HepG2 (cell line): ENCODE measurements at regions of chr17 and their contacts with region 1.

Region 1: GRCh38 chr17:81927653-81928543 is at the start of gene MAFG:
- DNase-seq: peak; percentile 94
- ATAC-seq: peak; percentile 46
- H3K4me3 ChIP-seq: peak within 1 kb of the TSS; percentile 79 to 94 (median 91)
- H3K27ac ChIP-seq: peak within 1 kb of the TSS; percentile 92
- H3K4me1 ChIP-seq: peaks cover 64% of the 10 kb centered on the region
- H3K27me3 ChIP-seq: no peaks in the 10 kb centered on the region
- CTCF ChIP-seq: peak; percentile 73
- EP300 ChIP-seq: 0 out of 4 replicates have a peak, but pooled peaks of 1 of the 2 experiments have one; percentile 11
- POLR2A ChIP-seq: peak in 1 of 2 experiments; percentile 31; a peak in 1 of 4 replicates
- RAD21 ChIP-seq: peak; percentile 85
- total RNA-seq, gene MAFG: 12.4 and 14.5 TPM in 2 replicates

Region 2: GRCh38 chr17:81902023-81902652 is 25.8 kb before region 1 on chr17 and contains the start of gene NPB:
- CTCF ChIA-PET with region 1: no interaction called
- POLR2A ChIA-PET with region 1: interaction called, 10 read pairs
- in situ Hi-C with region 1: no loop called
- intact Hi-C with region 1: no loop called
- DNase-seq: no peak
- ATAC-seq: peak; percentile 22
- H3K4me3 ChIP-seq: peak within 1 kb of the TSS; percentile 17 to 65 (median 35); a peak in 4 of 6 replicates
- H3K27ac ChIP-seq: peak within 1 kb of the TSS; percentile 28
- H3K4me1 ChIP-seq: peaks cover 16% of the 10 kb centered on the region
- H3K27me3 ChIP-seq: no peaks in the 10 kb centered on the region
- CTCF ChIP-seq: no peak
- EP300 ChIP-seq: no peak
- POLR2A ChIP-seq: no peak
- RAD21 ChIP-seq: peak; percentile 46
- total RNA-seq, gene NPB: 0.56 and 0.93 TPM in 2 replicates

Region 3: DNA sequence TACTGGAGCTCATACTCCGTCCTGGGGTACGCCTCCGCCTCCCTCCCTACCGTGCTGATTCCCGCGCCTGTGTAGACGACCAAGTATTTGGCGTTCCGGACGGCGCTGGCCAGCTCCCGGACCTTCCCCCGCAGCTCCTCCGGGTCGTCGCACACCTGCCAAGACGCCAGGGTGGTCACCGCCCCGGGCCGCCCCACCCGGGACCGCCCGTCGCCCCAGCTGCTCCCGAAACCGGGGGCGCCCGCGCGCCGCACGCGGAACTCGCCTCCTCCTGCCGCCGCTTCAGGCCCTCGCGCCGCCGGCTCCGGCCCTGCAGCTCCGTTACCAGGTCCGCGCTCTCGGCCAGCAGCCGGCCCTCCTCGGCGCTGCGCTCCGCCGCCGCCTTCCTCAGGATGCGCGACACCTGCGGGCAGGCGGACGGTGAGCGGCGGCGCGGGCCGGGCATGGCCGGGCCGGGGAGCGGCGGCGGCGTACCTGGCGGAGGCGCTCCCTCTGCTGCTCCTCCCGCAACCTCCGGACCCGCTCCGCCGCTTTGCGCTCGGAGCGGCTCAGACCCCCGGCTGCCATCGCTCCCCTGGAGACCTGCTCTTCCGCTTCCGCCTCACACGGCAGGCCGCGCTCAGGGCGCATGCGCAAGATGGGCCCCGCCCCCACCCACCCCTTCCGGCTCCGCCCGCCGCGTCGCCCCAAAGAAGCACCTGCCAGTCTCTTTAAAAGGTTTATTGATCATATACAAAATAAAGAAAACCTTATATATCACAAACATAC is 10.1 kb before region 1 on chr17 and contains the start of gene SIRT7:
- CTCF ChIA-PET with region 1: no interaction called
- POLR2A ChIA-PET with region 1: interaction called, 49 read pairs
- in situ Hi-C with region 1: no loop called
- intact Hi-C with region 1: no loop called
- DNase-seq: peak; percentile 72
- ATAC-seq: peak; percentile 67
- H3K4me3 ChIP-seq: peak within 1 kb of the TSS; percentile 87 to 94 (median 93)
- H3K27ac ChIP-seq: peak within 1 kb of the TSS; percentile 46
- H3K4me1 ChIP-seq: peaks cover 27% of the 10 kb centered on the region
- H3K27me3 ChIP-seq: no peaks in the 10 kb centered on the region
- CTCF ChIP-seq: no peak; the same call in 1 of the 2 replicates
- EP300 ChIP-seq: no peak
- POLR2A ChIP-seq: peak; percentile 50 to 80; a peak in 3 of 4 replicates
- RAD21 ChIP-seq: peak; percentile 66
- total RNA-seq, gene SIRT7: 14.5 and 24.8 TPM in 2 replicates

Region 4: DNA sequence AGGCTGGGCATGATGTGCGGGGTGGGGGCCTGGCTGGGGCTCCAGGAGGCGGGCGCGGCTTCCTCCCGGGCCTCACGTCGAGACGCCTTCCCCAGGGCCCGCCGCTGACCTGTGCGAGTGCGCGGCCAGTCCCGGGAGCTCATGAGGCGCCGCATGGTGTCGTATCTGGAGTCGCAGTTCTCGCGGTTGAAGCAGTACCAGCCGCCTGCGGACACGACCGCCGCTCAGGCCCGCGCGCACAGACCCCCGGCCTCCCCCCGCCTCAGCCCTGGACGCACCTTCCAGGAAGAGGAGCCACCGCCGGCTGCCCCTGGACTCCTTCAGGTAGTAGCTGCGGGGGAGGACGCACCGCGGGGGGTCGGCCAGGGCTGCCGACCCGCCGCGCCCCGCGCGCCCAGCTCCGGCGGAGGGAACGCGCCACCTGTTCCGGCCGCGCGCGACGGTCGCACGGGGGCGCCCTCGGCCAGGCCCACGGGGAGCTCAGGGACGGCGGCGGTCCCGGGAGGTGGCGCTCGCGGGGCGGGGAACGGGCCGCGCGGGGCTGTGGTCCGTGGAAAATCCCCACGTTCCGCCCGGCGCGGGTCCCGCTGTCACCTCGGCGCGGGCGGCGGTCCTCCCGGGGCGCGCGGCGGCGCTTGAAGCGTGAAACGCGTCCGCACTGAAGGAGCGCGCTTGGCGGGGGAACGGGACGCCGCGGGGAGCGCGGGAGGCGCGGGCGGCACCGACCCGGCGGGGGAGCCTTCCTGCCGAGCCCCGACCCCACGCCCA is 31.6 kb after region 1 on chr17:
- CTCF ChIA-PET with region 1: no interaction called
- POLR2A ChIA-PET with region 1: interaction called, 32 read pairs
- in situ Hi-C with region 1: no loop called
- intact Hi-C with region 1: no loop called
- DNase-seq: peak; percentile 40
- ATAC-seq: peak; percentile 49
- H3K4me3 ChIP-seq: peak overlapping the region; percentile 95 to 97 (median 96)
- H3K27ac ChIP-seq: peak overlapping the region; percentile 86
- H3K4me1 ChIP-seq: peaks cover 70% of the 10 kb centered on the region
- H3K27me3 ChIP-seq: no peaks in the 10 kb centered on the region; a peak in 1 of 5 replicates
- CTCF ChIP-seq: peak; percentile 80
- EP300 ChIP-seq: peak in 1 of 2 experiments; percentile 5; a peak in 1 of 4 replicates
- POLR2A ChIP-seq: no peak
- RAD21 ChIP-seq: peak; percentile 100